ENCODE measurements at regions of chr16 and their contacts with region 1.

Region 1: GRCh38 chr16:30941600-30942425 is 7.1 kb upstream of the ORAI3 start:
- DNase-seq: peak; percentile 46 to 60 (median 59)
- H3K4me3 ChIP-seq: peak overlapping the region in 1 of 2 donors; percentile 22
- H3K4me3 Mint-ChIP-seq: peak overlapping the region in 3 of 8 donors; percentile 15 to 29 (median 29)
- H3K27ac ChIP-seq: no peak overlapping the region
- H3K27ac Mint-ChIP-seq: peak overlapping the region in 4 of 7 donors; percentile 5 to 78 (median 49)
- H3K4me1 ChIP-seq: peaks cover 9% of the 10 kb centered on the region
- H3K4me1 Mint-ChIP-seq: peaks cover 9 to 24% (median 21%) of the 10 kb centered on the region in 4 donors
- H3K27me3 ChIP-seq: no peaks in the 10 kb centered on the region
- H3K27me3 Mint-ChIP-seq: no peaks in the 10 kb centered on the region

Region 2: GRCh38 chr16:30867747-30868146 is 74.1 kb before region 1 on chr16:
- CTCF ChIA-PET with region 1: no interaction called
- POLR2A ChIA-PET with region 1: no interaction called
- intact Hi-C with region 1: no loop called
- DNase-seq: no peak
- H3K4me3 ChIP-seq: no peak overlapping the region
- H3K4me3 Mint-ChIP-seq: no peak overlapping the region
- H3K27ac ChIP-seq: no peak overlapping the region
- H3K27ac Mint-ChIP-seq: no peak overlapping the region
- H3K4me1 ChIP-seq: no peaks in the 10 kb centered on the region
- H3K4me1 Mint-ChIP-seq: peaks cover 0 to 3% (median 0%) of the 10 kb centered on the region in 4 donors
- H3K27me3 ChIP-seq: no peaks in the 10 kb centered on the region
- H3K27me3 Mint-ChIP-seq: no peaks in the 10 kb centered on the region

Region 3: GRCh38 chr16:30902029-30902972 is 39.5 kb before region 1 on chr16:
- CTCF ChIA-PET with region 1: interaction called, 28 read pairs
- POLR2A ChIA-PET with region 1: interaction called, 7 read pairs
- intact Hi-C with region 1: loop called (anchors 1 kb)
- DNase-seq: peak; percentile 54 to 72 (median 58)
- H3K4me3 ChIP-seq: peak overlapping the region in 1 of 2 donors; percentile 68
- H3K4me3 Mint-ChIP-seq: peak overlapping the region; percentile 94 to 99 (median 96)
- H3K27ac ChIP-seq: peak overlapping the region; percentile 70
- H3K27ac Mint-ChIP-seq: peak overlapping the region; percentile 91 to 99 (median 98)
- H3K4me1 ChIP-seq: peaks cover 41% of the 10 kb centered on the region
- H3K4me1 Mint-ChIP-seq: peaks cover 19 to 47% (median 32%) of the 10 kb centered on the region in 4 donors
- H3K27me3 ChIP-seq: no peaks in the 10 kb centered on the region
- H3K27me3 Mint-ChIP-seq: no peaks in the 10 kb centered on the region

Region 4: GRCh38 chr16:30914830-30915229 is 27.0 kb before region 1 on chr16:
- CTCF ChIA-PET with region 1: no interaction called
- POLR2A ChIA-PET with region 1: no interaction called
- intact Hi-C with region 1: no loop called
- DNase-seq: no peak
- H3K4me3 ChIP-seq: no peak overlapping the region
- H3K4me3 Mint-ChIP-seq: no peak overlapping the region
- H3K27ac ChIP-seq: no peak overlapping the region
- H3K27ac Mint-ChIP-seq: no peak overlapping the region
- H3K4me1 ChIP-seq: no peaks in the 10 kb centered on the region
- H3K4me1 Mint-ChIP-seq: no peaks in the 10 kb centered on the region
- H3K27me3 ChIP-seq: no peaks in the 10 kb centered on the region
- H3K27me3 Mint-ChIP-seq: no peaks in the 10 kb centered on the region

Region 5: GRCh38 chr16:30929167-30929566 is 12.6 kb before region 1 on chr16:
- CTCF ChIA-PET with region 1: interaction called, 22 read pairs
- POLR2A ChIA-PET with region 1: interaction called, 8 read pairs
- intact Hi-C with region 1: no loop called
- DNase-seq: no peak
- H3K4me3 ChIP-seq: no peak overlapping the region
- H3K4me3 Mint-ChIP-seq: no peak overlapping the region
- H3K27ac ChIP-seq: no peak overlapping the region
- H3K27ac Mint-ChIP-seq: no peak overlapping the region
- H3K4me1 ChIP-seq: peaks cover 9% of the 10 kb centered on the region
- H3K4me1 Mint-ChIP-seq: peaks cover 5 to 14% (median 11%) of the 10 kb centered on the region in 4 donors
- H3K27me3 ChIP-seq: no peaks in the 10 kb centered on the region
- H3K27me3 Mint-ChIP-seq: no peaks in the 10 kb centered on the region